PC-9 (cell line): ENCODE measurements at regions of chr2 and their contacts with region 1.

Region 1: GRCh38 chr2:69616756-69617155 is 26.8 kb downstream of the AAK1 start:
- DNase-seq: peak; percentile 65 to 86
- H3K4me3 ChIP-seq: peak overlapping the region; percentile 19; the same call in 1 of the 2 replicates
- H3K27ac ChIP-seq: peak overlapping the region; percentile 76
- H3K4me1 ChIP-seq: peaks cover 64% of the 10 kb centered on the region
- H3K27me3 ChIP-seq: no peaks in the 10 kb centered on the region
- CTCF ChIP-seq: no peak

Region 2: DNA sequence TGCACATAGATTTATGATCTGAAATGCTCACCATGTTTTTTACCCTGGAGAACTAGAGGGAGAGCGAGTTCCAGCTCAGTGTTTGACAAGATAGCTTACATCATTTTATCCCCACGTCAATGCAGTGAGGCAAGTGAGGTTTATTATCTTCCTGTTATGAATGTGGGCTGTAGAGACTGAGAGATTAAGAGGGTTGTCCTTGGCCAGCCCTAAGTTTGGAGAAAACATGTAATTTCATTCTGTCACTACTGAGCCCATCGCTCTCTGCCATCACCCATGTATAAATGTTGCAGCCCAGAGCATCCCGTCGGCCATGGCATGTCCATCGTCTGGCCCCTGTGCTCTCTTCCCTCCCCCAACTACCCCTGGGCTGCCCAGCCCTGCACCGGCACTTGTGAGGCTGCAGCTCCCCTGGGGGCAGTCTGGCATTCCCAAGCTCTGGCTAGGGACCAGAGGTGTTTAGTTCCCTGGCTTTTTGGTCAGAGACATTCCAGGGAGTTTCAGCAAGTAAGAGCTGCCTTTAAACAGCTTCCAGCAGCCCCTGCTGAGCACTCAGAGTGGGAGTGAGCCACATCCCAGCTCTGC is 467.0 kb before region 1 on chr2:
- CTCF ChIA-PET with region 1: no interaction called
- POLR2A ChIA-PET with region 1: no interaction called
- intact Hi-C with region 1: no loop called
- DNase-seq: no peak
- H3K4me3 ChIP-seq: no peak overlapping the region
- H3K27ac ChIP-seq: no peak overlapping the region
- H3K4me1 ChIP-seq: no peaks in the 10 kb centered on the region
- H3K27me3 ChIP-seq: no peaks in the 10 kb centered on the region
- CTCF ChIP-seq: no peak

Region 3: GRCh38 chr2:69567157-69567908 is 49.4 kb before region 1 on chr2:
- CTCF ChIA-PET with region 1: interaction called, 4 read pairs
- POLR2A ChIA-PET with region 1: no interaction called
- intact Hi-C with region 1: loop called (anchors 1 kb)
- DNase-seq: peak; percentile 67 to 99
- H3K4me3 ChIP-seq: peak overlapping the region; percentile 12; the same call in 1 of the 2 replicates
- H3K27ac ChIP-seq: peak overlapping the region; percentile 91
- H3K4me1 ChIP-seq: peaks cover 84% of the 10 kb centered on the region
- H3K27me3 ChIP-seq: no peaks in the 10 kb centered on the region
- CTCF ChIP-seq: no peak

Region 4: GRCh38 chr2:69589973-69590652 is 26.6 kb before region 1 on chr2:
- CTCF ChIA-PET with region 1: no interaction called
- POLR2A ChIA-PET with region 1: interaction called, 5 read pairs
- intact Hi-C with region 1: loop called (anchors 1 kb)
- DNase-seq: no peak
- H3K4me3 ChIP-seq: no peak overlapping the region
- H3K27ac ChIP-seq: no peak overlapping the region
- H3K4me1 ChIP-seq: no peaks in the 10 kb centered on the region
- H3K27me3 ChIP-seq: no peaks in the 10 kb centered on the region
- CTCF ChIP-seq: no peak